ENCODE measurements at regions of chr12 and their contacts with region 1.

Region 1: DNA sequence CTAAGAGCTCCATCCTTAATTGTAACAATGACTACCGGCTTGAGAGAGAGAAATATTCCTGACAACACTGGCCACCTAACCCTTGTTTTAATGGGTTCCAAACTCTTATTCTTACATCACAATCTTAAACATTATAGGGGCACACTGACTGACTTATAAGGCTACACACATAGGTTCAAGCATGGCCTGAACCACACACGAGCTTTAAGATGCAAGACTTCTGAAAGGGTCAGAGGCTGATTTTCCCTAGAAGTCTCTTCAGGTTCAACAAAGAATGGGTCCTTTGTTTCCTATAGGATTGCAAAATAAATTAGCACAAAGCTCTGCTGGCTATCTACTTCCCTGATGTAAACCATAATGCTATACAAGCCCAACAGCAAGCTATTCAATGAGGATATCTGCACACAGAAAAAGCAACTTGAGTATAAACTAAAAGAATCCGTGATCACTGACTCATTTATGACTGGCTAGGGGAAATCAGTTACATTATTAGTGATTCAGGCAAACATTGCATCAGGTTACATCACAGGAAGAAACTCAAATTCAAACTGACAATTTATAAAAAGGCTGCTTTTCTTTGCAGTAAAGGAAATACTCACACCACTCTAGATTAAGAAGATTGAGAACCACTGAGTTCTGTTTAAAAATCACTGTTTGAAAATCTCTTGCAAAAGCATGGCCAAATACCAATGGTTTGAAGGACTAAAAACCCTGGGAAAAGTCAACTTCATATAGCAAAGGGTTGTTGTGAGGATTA is 8.5 kb downstream of the BTG1 start:
- DNase-seq: peak; percentile 32
- H3K4me3 Mint-ChIP-seq: peak overlapping the region; percentile 87
- H3K27ac Mint-ChIP-seq: peak overlapping the region; percentile 99
- H3K4me1 Mint-ChIP-seq: peaks cover 61% of the 10 kb centered on the region
- H3K27me3 Mint-ChIP-seq: no peaks in the 10 kb centered on the region
- CTCF ChIP-seq: no peak

Region 2: DNA sequence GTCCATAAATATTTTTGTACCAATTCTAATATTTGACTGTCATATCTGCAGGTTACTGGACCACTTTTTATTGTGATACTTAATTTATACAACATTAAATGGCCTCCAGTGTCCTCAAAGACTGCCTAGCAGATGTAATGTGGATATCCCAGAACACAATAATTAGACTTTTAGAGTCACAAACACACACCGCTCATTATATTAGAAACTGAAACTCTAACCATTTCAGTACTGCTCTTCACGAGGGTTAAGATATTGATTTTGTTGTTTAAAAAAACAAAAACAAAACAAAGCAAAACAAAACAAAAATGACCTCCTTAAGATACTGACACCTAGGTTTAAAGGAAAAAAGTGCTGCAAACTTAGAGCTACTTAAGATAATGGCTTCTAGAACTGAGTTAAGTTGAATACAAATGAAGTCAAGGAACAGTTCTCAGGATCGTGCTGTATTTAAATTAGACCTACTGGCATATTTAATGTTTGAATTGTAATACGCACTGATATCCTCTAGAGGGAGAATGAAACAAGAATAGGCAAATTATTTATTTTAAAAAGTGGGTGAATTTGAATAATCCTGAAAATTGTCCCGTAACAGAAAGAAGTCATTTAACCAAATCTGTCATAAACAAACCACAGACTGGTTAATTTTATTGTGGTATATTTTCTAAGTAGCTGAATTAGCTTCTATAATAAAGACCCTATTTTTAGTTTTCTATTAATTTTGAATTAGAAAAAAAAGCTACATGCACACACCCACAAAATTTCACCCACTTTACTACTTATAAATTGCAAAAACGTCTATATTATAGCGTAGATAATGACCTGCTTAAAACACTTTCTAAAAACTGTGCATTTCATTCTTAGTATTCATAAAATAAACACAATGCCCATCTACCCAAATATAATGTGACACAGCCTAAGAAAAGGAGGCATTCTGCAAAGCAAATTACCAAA is 559.3 kb before region 1 on chr12:
- CTCF ChIA-PET with region 1: no interaction called
- intact Hi-C with region 1: loop called (anchors 5 kb)
- DNase-seq: no peak
- H3K4me3 Mint-ChIP-seq: peak overlapping the region; percentile 54
- H3K27ac Mint-ChIP-seq: peak overlapping the region; percentile 50
- H3K4me1 Mint-ChIP-seq: no peaks in the 10 kb centered on the region
- H3K27me3 Mint-ChIP-seq: no peaks in the 10 kb centered on the region
- CTCF ChIP-seq: peak; percentile 43

Region 3: GRCh38 chr12:91951571-91951970 is 185.6 kb before region 1 on chr12:
- CTCF ChIA-PET with region 1: no interaction called
- intact Hi-C with region 1: loop called (anchors 5 kb)
- DNase-seq: no peak
- H3K4me3 Mint-ChIP-seq: no peak overlapping the region
- H3K27ac Mint-ChIP-seq: peak overlapping the region; percentile 37
- H3K4me1 Mint-ChIP-seq: peaks cover 23% of the 10 kb centered on the region
- H3K27me3 Mint-ChIP-seq: no peaks in the 10 kb centered on the region
- CTCF ChIP-seq: no peak

Region 4: DNA sequence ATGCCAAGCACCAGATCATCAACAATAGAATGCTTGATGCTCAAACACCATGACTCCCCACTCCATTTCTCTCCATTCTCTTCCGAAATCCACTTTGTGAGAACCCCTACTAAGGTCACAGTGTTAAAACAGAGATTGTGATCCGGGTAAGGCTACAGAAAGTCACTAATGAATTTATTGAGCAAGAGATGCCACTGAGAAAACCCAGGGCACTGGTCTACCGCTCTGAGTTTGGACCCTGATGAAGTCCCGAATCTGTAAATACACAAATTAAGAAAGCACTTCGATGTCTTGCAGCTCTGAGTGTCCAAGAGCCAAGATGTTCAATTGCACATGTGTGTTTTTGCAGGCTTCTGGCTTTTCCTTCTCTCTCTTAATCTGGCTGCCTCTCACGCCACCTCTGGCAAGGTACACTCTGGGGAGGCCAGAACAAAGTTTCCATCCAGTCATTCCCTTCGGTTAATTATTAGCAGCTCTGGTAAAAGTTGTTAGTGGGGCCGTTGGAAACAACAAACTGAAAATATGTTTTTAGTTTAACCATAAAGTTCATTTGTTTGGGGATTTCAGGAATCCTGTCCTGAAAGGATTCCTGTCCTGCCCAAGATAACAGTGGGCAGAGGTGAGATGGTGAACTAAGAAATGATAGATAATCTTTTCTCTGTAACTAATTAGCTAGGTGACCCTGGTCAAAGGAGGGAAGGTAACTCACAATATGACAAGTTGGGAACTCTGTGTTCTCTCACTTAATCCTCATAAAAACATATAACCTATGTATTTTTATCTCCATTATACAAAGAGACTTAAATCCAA is 66.9 kb before region 1 on chr12:
- CTCF ChIA-PET with region 1: interaction called, 5 read pairs
- intact Hi-C with region 1: loop called (anchors 1 kb)
- DNase-seq: peak; percentile 80
- H3K4me3 Mint-ChIP-seq: peak overlapping the region; percentile 54
- H3K27ac Mint-ChIP-seq: peak overlapping the region; percentile 91
- H3K4me1 Mint-ChIP-seq: peaks cover 56% of the 10 kb centered on the region
- H3K27me3 Mint-ChIP-seq: no peaks in the 10 kb centered on the region
- CTCF ChIP-seq: peak; percentile 15

Region 5: GRCh38 chr12:92396647-92397252 is 259.6 kb after region 1 on chr12:
- CTCF ChIA-PET with region 1: no interaction called
- intact Hi-C with region 1: no loop called
- DNase-seq: no peak
- H3K4me3 Mint-ChIP-seq: no peak overlapping the region
- H3K27ac Mint-ChIP-seq: no peak overlapping the region
- H3K4me1 Mint-ChIP-seq: no peaks in the 10 kb centered on the region
- H3K27me3 Mint-ChIP-seq: no peaks in the 10 kb centered on the region
- CTCF ChIP-seq: no peak

Region 6: GRCh38 chr12:92539113-92539749 is 402.1 kb after region 1 on chr12:
- CTCF ChIA-PET with region 1: no interaction called
- intact Hi-C with region 1: loop called (anchors 1 kb)
- DNase-seq: peak; percentile 63
- H3K4me3 Mint-ChIP-seq: peak overlapping the region; percentile 6
- H3K27ac Mint-ChIP-seq: peak overlapping the region; percentile 95
- H3K4me1 Mint-ChIP-seq: peaks cover 74% of the 10 kb centered on the region
- H3K27me3 Mint-ChIP-seq: no peaks in the 10 kb centered on the region
- CTCF ChIP-seq: no peak